GM13976 (cell line): ENCODE measurements at regions of chr15 and their contacts with region 1.

Region 1: DNA sequence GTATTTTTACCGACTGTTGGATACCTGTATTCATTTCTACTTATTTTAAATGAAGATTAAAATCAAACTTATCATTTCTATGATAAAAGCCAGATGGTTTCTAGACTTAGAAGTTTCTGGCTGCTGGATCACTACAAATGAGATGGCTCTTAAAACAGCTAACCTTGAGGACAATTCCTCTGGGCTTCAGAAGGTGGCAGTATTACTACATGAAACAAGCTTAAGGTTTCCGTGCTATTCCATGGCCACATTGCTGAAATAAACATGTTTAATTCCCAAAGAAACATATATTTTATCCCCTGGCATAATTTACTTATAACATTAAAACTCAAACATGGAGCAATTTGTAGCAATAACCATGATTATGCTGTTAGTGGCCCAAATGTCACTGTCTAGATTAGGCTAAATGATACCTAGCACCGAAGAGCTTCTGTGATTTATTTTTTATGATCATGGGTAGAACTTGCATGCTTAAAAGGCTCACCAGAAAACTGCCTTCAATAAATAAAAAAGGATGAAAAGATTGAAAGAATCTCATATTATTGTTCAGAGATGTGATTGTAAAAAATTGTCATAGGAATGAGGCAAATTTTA is 204.0 kb upstream of the NANOGP8 start:
- DNase-seq: peak; percentile 37
- CTCF ChIP-seq: peak; percentile 55

Region 2: DNA sequence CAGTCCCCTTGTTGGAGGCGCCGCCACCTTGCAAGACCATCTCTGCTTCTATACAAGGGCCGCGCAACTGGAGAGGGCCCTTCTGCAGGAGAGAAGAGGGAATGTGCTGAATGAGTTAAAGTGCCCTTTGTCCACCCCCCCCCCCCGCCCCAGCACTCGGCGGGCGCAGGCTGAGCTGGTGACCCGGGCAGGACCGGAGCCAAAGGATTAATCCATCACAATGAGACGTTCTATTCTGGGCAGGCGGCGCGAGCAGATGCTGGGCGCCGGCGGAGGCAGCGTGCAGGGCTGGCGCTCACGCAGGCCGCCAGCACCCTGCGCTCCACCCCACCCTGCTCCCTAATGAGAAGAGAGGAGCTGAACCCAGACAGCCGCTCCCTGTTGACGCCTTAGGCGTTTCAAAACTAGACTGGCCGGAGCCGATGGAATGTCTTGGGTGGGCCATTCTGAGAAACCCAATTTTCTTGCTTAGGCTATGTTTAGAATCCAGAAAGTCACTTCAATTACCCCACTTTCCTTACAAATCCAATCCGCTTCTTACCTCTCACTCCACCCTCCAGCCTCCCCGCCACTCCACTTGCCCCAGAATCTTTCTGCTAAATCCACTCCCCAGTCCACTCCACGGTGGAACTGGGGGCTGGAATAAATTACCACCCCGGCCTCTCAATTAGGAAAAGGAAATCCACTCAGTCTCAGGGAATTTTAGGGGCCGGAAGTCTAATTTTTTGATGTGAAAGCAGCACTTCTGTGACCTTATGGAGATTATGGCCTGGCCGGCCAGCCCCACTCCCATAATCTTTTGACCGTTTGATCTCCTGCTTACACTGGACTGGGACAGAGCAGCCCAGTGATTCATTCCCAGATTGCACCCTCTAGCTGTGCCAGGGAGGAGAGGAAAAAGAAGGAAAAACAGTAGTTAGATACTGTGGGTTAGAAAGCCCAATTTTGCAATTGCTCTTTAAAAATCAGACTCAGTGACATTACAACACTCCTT is 567.0 kb before region 1 on chr15:
- in situ Hi-C with region 1: no loop called
- DNase-seq: peak; percentile 19
- CTCF ChIP-seq: no peak

Region 3: GRCh38 chr15:35078221-35078915 is 210.8 kb before region 1 on chr15:
- in situ Hi-C with region 1: loop called (anchors 25 kb)
- DNase-seq: peak; percentile 75
- CTCF ChIP-seq: peak; percentile 88

Region 4: DNA sequence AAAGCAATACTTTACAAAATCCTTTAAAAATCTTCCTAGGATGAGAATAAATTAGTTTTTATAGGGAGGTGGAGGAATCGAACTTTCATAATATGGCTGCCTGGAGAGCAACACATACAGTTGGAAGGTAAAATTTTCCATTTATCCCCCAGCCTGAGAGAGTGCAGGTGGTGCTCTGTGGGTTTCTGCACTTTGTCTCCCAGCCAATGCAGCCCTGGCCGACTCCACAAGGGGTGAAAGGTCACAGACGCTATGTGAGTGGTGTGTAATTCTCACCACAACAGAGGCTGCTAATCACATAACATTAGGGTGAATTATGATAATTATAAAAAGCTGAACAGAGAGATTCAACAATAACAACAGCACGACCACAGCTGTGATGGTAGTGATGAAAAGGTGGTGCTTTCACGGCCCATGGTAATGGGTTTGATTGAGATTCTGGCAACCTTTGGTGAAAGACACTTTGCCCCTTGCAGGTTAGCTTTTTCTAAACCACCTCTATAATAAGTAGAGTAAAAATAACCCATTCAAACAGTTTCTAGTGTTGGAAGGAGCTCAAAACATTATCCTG is 173.9 kb before region 1 on chr15:
- in situ Hi-C with region 1: no loop called
- DNase-seq: no peak
- CTCF ChIP-seq: no peak

Region 5: GRCh38 chr15:35444557-35445204 is 155.6 kb after region 1 on chr15:
- in situ Hi-C with region 1: loop called (anchors 10 kb)
- DNase-seq: peak; percentile 42
- CTCF ChIP-seq: peak; percentile 75